ENCODE measurements at regions of chr12 and their contacts with region 1.

Region 1: GRCh38 chr12:116703214-116703795 is 34.6 kb downstream of the SPRING1 start:
- DNase-seq: peak; percentile 86
- H3K4me3 ChIP-seq: no peak overlapping the region
- H3K27ac ChIP-seq: no peak overlapping the region
- H3K4me1 ChIP-seq: peaks cover 31% of the 10 kb centered on the region
- CTCF ChIP-seq: peak; percentile 94

Region 2: DNA sequence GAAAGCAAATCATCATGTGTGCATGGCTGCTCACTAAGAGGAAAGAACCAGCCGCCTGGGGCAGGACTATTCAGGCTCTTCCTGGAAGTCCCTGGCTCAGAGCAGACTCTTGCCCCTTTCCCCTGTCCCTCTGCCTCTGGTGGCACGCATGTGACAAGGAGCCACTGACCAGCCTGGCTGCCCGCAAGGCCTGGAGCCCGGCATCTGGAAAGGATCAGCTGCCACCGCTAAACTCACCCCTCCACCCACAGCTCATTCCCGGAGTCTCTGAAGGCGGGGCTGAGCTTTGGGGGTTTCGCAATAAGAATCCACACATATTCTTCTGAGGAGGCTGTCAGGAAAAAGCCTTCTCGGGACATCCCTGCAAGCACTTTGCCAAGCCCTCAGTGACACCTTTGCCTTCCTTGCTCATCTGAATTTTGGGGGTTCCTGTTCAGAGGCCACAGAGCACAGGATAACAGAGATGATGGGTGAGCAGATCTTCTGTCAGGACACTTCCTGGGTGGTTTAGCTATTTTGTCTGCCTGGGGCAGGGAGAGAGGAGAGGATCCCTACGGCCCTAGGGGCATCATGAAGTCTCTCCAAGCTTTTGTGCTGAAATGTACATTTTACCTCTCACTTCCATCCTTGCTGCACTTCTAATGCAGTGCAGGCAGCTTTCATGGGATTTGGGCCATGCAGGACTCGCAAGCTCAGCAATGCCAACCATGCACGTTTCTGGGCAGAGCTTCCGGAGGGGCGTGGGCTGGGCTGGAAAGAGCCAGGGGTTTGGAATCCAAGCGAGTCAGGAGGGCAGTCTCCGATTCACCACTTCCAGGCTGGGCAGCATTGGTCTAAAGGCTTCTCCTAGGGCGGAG is 268.9 kb before region 1 on chr12:
- CTCF ChIA-PET with region 1: no interaction called
- POLR2A ChIA-PET with region 1: no interaction called
- intact Hi-C with region 1: no loop called
- DNase-seq: no peak
- H3K4me3 ChIP-seq: no peak overlapping the region
- H3K27ac ChIP-seq: no peak overlapping the region
- H3K4me1 ChIP-seq: no peaks in the 10 kb centered on the region
- CTCF ChIP-seq: no peak

Region 3: DNA sequence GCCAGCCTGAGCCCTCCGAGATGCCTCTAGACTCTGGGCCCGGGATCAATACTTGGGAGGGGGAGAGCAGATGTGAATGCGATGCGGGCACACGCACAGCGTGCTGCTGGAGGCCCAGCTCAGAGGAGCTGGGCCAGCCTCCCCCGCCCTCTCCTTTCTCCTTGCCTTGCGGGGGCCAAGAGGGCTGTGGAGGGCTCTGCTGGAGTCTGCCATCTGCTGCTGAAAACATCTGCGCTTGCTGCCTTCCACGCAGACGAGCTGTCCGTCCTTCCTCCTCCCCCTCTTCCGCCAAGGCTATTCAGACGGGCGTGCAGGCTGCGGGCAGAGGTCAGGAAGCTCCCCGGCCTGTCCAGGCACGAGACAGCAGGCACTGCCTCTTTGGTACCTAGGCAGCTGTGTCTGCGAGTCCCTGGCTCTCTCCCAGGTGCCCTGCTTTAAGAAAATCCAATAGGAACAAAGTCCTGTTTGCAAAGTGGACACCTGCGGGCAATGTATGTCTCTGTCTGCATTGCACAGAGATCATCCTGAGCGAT is 40.6 kb before region 1 on chr12:
- CTCF ChIA-PET with region 1: no interaction called
- POLR2A ChIA-PET with region 1: no interaction called
- intact Hi-C with region 1: no loop called
- DNase-seq: no peak
- H3K4me3 ChIP-seq: no peak overlapping the region
- H3K27ac ChIP-seq: no peak overlapping the region
- H3K4me1 ChIP-seq: no peaks in the 10 kb centered on the region
- CTCF ChIP-seq: no peak

Region 4: DNA sequence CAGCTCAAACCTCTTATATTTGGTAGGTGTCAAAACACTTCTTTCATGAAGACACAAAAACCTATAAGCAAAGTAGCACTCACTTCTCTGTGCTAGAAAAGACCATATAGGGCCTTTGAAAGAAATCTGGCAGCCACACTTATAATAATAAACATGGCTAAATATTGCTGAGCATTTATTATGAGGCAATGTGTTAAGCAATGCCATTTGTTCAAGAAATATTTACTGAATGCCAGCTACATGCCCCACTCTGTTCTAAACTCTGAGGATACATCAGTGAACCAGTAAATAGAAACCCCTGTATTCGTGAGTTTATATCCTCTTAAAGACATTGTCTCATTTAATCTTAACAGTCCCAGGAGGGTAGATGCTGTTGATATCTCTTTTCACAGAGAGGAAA is 86.8 kb after region 1 on chr12:
- CTCF ChIA-PET with region 1: no interaction called
- POLR2A ChIA-PET with region 1: no interaction called
- intact Hi-C with region 1: no loop called
- DNase-seq: no peak
- H3K4me3 ChIP-seq: no peak overlapping the region
- H3K27ac ChIP-seq: no peak overlapping the region
- H3K4me1 ChIP-seq: no peaks in the 10 kb centered on the region
- CTCF ChIP-seq: no peak

Region 5: DNA sequence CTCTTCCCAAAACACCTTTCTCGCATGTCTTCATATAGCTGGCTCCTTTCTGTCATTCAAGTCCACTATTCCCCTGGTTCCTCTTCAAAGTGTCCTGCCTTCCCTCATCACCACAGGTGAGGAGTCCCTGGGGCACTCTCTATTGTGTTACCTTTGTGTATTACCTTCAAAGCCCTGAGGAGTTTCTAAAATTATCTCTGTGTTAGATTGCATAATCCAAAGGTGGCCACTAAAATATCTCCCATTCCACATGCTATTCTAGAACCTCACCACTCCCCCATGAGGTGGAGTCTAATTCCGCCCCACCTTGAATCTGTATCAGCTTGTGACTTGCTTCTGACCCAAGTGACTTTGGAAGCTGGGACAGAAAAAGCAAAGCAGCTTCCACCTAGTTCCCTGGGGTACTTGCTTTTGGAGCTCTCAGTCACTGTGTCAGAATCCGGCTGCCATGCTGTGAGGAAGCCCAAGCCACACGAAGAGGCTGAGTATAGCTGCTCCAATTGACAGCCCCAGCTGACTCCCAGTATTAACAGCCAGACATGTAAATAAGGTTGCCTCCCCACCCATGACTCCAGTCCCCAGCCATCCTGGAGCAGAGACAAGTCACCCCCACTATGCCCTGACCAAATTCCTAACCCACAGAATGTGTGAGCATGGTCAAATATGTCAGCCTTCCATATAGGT is 171.1 kb after region 1 on chr12:
- CTCF ChIA-PET with region 1: no interaction called
- POLR2A ChIA-PET with region 1: no interaction called
- intact Hi-C with region 1: no loop called
- DNase-seq: no peak
- H3K4me3 ChIP-seq: no peak overlapping the region
- H3K27ac ChIP-seq: no peak overlapping the region
- H3K4me1 ChIP-seq: peaks cover 29% of the 10 kb centered on the region
- CTCF ChIP-seq: no peak

Region 6: DNA sequence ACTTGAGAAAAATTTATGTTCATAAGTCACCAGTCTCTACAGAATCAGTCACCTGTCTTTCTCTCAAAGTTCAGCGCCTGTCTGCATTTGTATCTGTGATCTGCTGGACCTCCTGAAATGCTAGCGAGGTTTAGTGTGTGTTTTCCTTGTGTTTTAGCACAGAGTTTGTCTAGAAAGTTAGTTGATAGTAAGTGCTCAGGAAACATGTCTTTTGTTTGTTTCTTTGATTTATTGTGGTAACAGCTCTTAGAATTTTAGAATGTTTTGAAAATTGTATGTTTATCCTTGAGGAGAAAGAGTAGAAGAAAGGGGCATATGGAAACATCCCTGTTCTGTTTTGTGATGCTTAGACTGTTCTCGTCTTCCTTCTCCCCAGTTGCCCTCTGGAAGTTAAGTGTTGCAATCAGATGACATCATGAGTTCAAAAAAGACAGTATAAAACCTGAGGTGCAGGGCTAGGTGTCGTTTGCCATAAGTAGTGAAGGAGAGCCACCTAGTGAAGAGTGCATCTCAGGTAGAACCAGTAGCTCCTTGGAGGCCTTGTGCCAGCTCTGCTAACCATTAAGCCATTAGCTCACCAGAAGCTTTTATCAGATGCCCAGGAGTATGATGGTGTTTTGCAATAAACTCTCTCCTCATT is 252.2 kb after region 1 on chr12:
- CTCF ChIA-PET with region 1: interaction called, 3 read pairs
- POLR2A ChIA-PET with region 1: interaction called, 3 read pairs
- intact Hi-C with region 1: loop called (anchors 1 kb)
- DNase-seq: peak; percentile 69
- H3K4me3 ChIP-seq: no peak overlapping the region
- H3K27ac ChIP-seq: no peak overlapping the region
- H3K4me1 ChIP-seq: peaks cover 9% of the 10 kb centered on the region
- CTCF ChIP-seq: peak; percentile 75

Region 7: GRCh38 chr12:117025481-117026151 is 322.3 kb after region 1 on chr12:
- CTCF ChIA-PET with region 1: no interaction called
- POLR2A ChIA-PET with region 1: no interaction called
- intact Hi-C with region 1: loop called (anchors 1 kb)
- DNase-seq: peak; percentile 69
- H3K4me3 ChIP-seq: no peak overlapping the region
- H3K27ac ChIP-seq: no peak overlapping the region
- H3K4me1 ChIP-seq: no peaks in the 10 kb centered on the region
- CTCF ChIP-seq: peak; percentile 98

Region 8: GRCh38 chr12:117119592-117120198 is 416.4 kb after region 1 on chr12:
- CTCF ChIA-PET with region 1: interaction called, 4 read pairs
- POLR2A ChIA-PET with region 1: interaction called, 4 read pairs
- intact Hi-C with region 1: loop called (anchors 1 kb)
- DNase-seq: peak; percentile 58
- H3K4me3 ChIP-seq: no peak overlapping the region
- H3K27ac ChIP-seq: no peak overlapping the region
- H3K4me1 ChIP-seq: no peaks in the 10 kb centered on the region
- CTCF ChIP-seq: peak; percentile 95

Measured in OCI-LY7 (cell line).